ENCODE measurements at regions of chr1 and their contacts with region 1.

Region 1: DNA sequence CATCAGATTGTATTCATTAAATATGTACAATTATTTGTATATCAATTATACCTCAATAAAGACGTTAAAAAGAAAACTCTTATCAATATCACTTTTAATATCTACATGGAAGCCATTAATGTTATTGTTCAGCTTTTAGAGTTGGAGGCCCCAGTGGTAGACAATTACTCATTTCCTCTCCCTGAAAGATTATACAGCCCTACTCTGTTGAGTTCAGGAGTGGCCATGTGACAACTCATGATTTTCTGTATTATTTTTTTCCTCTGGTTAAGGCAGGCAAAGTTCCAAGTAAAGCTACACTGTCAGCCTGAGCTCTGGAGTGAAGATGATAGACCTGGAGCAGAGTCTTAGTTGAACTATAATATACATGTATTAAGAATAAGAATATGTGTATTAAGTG is 247.9 kb upstream of the B3GALT2 start:
- DNase-seq: no peak
- H3K4me3 ChIP-seq: no peak overlapping the region
- H3K27ac ChIP-seq: no peak overlapping the region
- H3K4me1 ChIP-seq: no peaks in the 10 kb centered on the region
- H3K27me3 ChIP-seq: no peaks in the 10 kb centered on the region
- CTCF ChIP-seq: no peak
- POLR2A ChIP-seq: no peak

Region 2: GRCh38 chr1:192201303-192201702 is 1233.0 kb before region 1 on chr1:
- intact Hi-C with region 1: loop called (anchors 5 kb)
- DNase-seq: no peak
- H3K4me3 ChIP-seq: no peak overlapping the region
- H3K27ac ChIP-seq: no peak overlapping the region
- H3K4me1 ChIP-seq: no peaks in the 10 kb centered on the region
- H3K27me3 ChIP-seq: no peaks in the 10 kb centered on the region
- CTCF ChIP-seq: no peak
- POLR2A ChIP-seq: no peak

Measured in vagina (tissue), 2 donors.